Body of pancreas (tissue), 4 donors: ENCODE measurements at regions of chr20 and their contacts with region 1.

Region 1: GRCh38 chr20:21719592-21720214 is 14.2 kb downstream of the PAX1 start:
- DNase-seq: peak; percentile 55 to 70 (median 62)
- ATAC-seq: no peak
- H3K4me3 ChIP-seq: no peak overlapping the region
- H3K27ac ChIP-seq: no peak overlapping the region
- H3K4me1 ChIP-seq: no peaks in the 10 kb centered on the region
- H3K27me3 ChIP-seq: peaks cover 0 to 5% of the 10 kb centered on the region in 2 donors
- CTCF ChIP-seq: peak; percentile 56 to 94 (median 61)
- POLR2A ChIP-seq: no peak

Region 2: DNA sequence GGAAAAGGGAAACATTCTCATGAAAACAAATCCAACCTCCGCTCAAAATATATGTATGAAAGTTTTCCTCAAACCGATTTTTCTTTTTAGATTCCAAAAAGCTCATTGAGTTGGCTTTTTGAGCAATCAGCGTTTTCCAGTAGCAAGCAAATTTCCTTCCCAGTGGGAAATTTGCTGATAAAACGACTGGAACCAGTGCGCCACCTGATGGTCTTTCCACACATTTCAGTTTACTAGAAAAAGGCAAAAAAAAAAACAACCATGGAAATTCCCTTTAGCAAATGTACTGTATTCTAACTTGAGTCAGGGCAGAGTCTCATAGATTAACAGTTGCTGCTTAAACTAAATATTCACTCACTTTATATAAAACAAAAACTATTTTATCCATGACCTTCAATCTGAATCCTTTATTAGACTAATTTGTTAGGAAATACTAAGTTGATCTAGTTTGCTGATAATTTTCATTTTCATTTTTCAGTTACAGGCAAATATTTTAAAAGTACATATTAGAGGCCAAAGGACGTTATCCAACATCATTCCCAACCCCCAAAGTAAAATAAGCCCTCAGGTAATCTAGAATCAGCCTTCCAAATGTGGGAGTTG is 593.1 kb after region 1 on chr20:
- intact Hi-C with region 1: loop called (anchors 10 kb)
- DNase-seq: peak; percentile 33 to 55 (median 43)
- ATAC-seq: no peak
- H3K4me3 ChIP-seq: no peak overlapping the region
- H3K27ac ChIP-seq: no peak overlapping the region
- H3K4me1 ChIP-seq: no peaks in the 10 kb centered on the region
- H3K27me3 ChIP-seq: no peaks in the 10 kb centered on the region
- CTCF ChIP-seq: peak; percentile 23 to 74 (median 60)
- POLR2A ChIP-seq: no peak